A549 (cell line): ENCODE measurements at regions of chr11 and their contacts with region 1.

Region 1: DNA sequence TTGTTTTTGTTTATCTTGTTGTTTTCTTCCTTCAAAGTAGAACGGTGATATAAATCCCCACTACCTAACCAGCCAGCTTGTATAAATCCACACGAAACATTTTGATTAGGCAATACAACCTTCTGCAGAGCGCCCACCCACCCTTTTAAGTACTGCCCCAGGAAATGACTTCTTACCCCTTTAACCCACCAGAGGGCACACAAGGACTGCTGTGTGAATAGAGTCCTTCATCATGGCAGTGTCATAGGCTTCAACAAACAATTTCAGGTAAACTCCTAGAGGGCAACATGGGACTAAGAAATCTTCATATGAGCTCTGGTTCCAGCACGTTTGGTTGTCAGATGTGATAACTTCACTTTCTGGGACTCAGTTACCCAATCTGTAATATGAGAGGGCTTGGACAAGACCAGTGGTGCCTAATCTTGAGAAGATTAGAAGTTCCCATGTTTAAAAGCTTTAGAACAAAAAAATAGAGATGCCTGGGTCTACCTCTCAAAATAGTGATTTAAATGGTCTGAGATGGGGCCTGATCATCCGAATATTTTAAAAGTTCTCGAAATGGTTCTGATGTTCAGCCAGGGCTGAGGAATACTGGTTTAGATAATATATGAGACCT is 56.1 kb downstream of the PIWIL4 start:
- DNase-seq: peak; percentile 60 to 82
- ATAC-seq: peak; percentile 88 to 96
- H3K4me3 ChIP-seq: no peak overlapping the region
- H3K27ac ChIP-seq: no peak overlapping the region
- H3K4me1 ChIP-seq: no peaks in the 10 kb centered on the region
- CTCF ChIP-seq: peak; percentile 91
- EP300 ChIP-seq: no peak
- POLR2A ChIP-seq: no peak
- RAD21 ChIP-seq: peak; percentile 94 to 97

Region 2: GRCh38 chr11:94297985-94298576 is 325.1 kb before region 1 on chr11:
- CTCF ChIA-PET with region 1: no interaction called
- POLR2A ChIA-PET with region 1: no interaction called
- DNase-seq: no peak
- ATAC-seq: peak in 1 of 2 experiments; percentile 50; a peak in 1 of 6 replicates
- H3K4me3 ChIP-seq: no peak overlapping the region
- H3K27ac ChIP-seq: no peak overlapping the region
- H3K4me1 ChIP-seq: no peaks in the 10 kb centered on the region
- CTCF ChIP-seq: no peak
- EP300 ChIP-seq: no peak
- POLR2A ChIP-seq: no peak
- RAD21 ChIP-seq: no peak

Region 3: GRCh38 chr11:94613120-94613519 is 10.1 kb before region 1 on chr11:
- CTCF ChIA-PET with region 1: interaction called, 16 read pairs
- POLR2A ChIA-PET with region 1: no interaction called
- DNase-seq: no peak
- ATAC-seq: no peak
- H3K4me3 ChIP-seq: no peak overlapping the region
- H3K27ac ChIP-seq: no peak overlapping the region
- H3K4me1 ChIP-seq: no peaks in the 10 kb centered on the region
- CTCF ChIP-seq: no peak
- EP300 ChIP-seq: no peak
- POLR2A ChIP-seq: no peak
- RAD21 ChIP-seq: no peak

Region 4: DNA sequence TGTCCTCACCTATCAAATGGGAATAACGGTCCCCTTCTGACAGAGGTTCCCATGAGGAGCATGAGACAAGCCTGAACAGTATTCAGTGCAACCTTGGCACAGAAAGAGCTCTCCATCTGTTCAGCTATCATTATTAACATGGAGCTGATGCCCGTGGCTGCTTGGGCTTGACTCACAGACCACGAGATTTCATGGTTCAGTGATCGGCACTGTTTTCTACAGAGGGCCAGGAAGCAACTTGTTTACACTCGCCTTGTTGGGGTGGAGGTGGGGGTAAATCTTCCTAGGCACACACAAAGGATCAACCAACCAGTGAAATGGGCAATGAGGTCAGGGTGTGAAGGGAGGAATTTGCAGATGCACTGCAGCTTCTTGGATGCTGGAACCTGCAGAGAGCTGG is 261.9 kb after region 1 on chr11:
- CTCF ChIA-PET with region 1: interaction called, 10 read pairs
- POLR2A ChIA-PET with region 1: no interaction called
- DNase-seq: no peak
- ATAC-seq: no peak
- H3K4me3 ChIP-seq: no peak overlapping the region
- H3K27ac ChIP-seq: no peak overlapping the region
- H3K4me1 ChIP-seq: peaks cover 9% of the 10 kb centered on the region
- CTCF ChIP-seq: no peak
- EP300 ChIP-seq: no peak
- POLR2A ChIP-seq: no peak
- RAD21 ChIP-seq: no peak

Region 5: GRCh38 chr11:94959179-94959578 is 336.0 kb after region 1 on chr11:
- CTCF ChIA-PET with region 1: interaction called, 10 read pairs
- POLR2A ChIA-PET with region 1: no interaction called
- DNase-seq: no peak
- ATAC-seq: no peak
- H3K4me3 ChIP-seq: no peak overlapping the region
- H3K27ac ChIP-seq: no peak overlapping the region
- H3K4me1 ChIP-seq: no peaks in the 10 kb centered on the region
- CTCF ChIP-seq: no peak
- EP300 ChIP-seq: no peak
- POLR2A ChIP-seq: no peak
- RAD21 ChIP-seq: no peak